ENCODE measurements at regions of chr3 and their contacts with region 1.

Region 1: DNA sequence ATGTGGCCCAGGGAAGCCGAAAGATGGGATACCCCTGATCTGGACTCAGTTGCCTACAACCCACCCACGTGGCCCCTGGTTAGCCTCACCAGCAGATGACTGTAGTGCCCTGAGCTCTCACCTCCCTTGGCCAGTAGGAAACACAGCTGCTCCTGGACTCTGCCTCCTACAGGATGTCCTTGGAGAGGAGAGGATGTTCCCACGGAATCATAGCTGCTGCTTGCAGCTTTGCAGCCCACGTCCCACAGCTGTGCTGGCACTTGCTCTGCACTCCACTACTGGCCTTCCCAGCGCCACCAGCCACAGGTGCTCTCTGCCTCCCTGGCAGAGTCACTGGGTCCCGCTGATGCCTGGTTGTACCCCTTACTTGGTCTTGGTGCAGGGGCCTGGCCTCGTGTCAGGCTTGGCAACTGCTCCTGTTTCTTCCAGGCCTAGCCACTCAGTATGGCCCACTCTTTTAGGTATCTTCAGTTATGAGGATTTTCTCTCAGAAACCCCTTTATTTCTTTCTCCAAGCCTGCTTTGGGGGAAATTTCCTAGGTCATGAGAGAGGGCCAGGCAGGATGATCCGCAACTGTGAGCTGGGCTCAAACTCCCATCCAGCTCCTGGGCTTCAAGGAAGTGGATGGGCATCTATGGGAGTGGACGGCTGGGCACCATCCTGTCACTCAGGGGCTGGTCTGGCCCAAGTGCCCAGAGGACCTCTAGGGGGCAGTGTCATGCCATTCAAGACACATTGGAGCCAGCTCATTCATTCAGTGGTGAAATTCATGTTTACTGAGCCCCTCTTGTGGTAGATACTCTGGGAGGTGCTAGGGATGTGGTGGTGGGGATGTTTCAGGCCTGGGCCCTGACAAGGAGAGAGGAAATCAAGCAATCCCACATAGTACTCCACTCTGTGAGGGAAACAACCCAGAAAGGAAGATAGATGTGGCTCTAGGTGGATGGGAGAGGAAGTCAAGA is 16.2 kb upstream of the VILL start:
- DNase-seq: peak; percentile 82
- ATAC-seq: peak; percentile 97
- H3K4me3 Mint-ChIP-seq: no peak overlapping the region
- H3K27ac Mint-ChIP-seq: peak overlapping the region; percentile 1
- H3K4me1 Mint-ChIP-seq: peaks cover 6% of the 10 kb centered on the region
- H3K27me3 Mint-ChIP-seq: peaks cover 2% of the 10 kb centered on the region

Region 2: DNA sequence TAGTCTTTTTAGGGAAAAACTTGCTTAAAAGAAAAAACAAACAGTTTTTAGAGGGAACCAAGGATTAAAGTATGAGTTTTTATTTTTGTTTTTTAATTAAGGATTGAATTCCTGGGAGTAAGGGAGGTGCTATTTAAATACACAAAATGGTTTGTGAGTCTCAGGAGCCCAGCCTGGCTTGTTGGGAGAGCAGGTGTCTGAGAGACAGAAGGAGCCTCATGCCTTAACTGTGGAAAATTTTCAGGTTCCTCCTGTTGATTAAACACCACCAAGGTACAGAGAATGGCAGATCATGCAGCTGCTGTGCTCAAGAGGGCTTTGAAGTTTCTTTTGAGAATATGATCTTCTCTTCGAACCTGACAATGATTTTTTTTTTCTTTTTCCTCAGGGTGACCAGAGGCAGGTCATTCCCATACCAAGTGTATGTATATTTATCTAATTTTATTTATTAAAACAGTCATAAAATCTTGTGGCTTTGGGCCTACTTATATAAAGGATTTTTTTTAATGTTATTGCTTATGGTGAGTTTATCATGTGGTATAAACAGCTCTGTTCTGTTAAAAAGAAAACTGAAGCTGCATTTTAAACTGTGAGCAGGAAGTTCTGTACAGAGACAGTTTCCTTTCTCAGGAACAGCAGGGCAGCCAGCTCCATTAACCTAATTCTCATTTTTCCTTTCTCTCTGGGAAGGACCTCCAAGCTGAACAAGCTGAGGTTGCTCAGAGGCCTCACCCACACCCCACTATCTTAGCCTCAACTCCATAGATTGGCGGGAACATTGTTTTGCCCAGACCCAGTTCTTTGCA is 17.5 kb before region 1 on chr3:
- CTCF ChIA-PET with region 1: interaction called, 15 read pairs
- POLR2A ChIA-PET with region 1: no interaction called
- DNase-seq: no peak
- ATAC-seq: peak; percentile 5
- H3K4me3 Mint-ChIP-seq: no peak overlapping the region
- H3K27ac Mint-ChIP-seq: peak overlapping the region; percentile 90
- H3K4me1 Mint-ChIP-seq: peaks cover 22% of the 10 kb centered on the region
- H3K27me3 Mint-ChIP-seq: no peaks in the 10 kb centered on the region

Region 3: GRCh38 chr3:38004415-38005076 is 30.1 kb after region 1 on chr3:
- CTCF ChIA-PET with region 1: interaction called, 36 read pairs
- POLR2A ChIA-PET with region 1: interaction called, 3 read pairs
- DNase-seq: peak; percentile 68
- ATAC-seq: peak; percentile 61
- H3K4me3 Mint-ChIP-seq: no peak overlapping the region
- H3K27ac Mint-ChIP-seq: peak overlapping the region; percentile 62
- H3K4me1 Mint-ChIP-seq: peaks cover 9% of the 10 kb centered on the region
- H3K27me3 Mint-ChIP-seq: no peaks in the 10 kb centered on the region

Region 4: DNA sequence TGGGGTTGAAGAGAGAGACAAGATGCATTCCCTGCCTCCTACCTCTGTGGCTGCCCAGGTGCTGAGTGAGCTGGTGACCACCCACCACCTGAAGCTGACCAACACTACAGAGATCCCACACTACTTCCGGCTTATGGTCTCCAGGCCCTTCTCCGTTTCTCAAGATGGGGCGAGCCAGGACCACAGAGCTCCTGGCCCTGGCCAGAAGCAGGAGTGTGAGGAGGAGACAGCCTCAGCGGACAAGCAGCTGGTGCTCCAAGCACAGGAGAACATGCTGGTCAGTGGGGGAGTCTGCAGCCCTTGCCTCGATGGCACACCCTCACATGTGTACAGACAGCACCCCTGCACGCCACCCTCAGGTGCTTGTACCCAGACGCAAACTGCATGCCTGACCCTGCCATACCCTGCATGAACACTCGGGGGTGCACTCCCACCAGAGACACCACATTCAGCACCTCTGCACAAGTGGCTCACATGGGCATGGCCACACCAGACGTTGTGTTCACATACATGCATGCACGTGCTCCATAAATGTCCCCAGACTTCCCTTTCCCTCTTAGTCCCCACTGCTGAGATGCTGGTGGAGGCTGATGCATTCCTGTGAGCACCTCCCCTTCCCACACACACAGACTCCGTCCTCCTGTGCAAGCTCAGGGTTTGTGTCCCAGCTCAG is 143.5 kb after region 1 on chr3:
- CTCF ChIA-PET with region 1: interaction called, 12 read pairs
- POLR2A ChIA-PET with region 1: interaction called, 3 read pairs
- DNase-seq: peak; percentile 84
- ATAC-seq: peak; percentile 81
- H3K4me3 Mint-ChIP-seq: no peak overlapping the region
- H3K27ac Mint-ChIP-seq: peak overlapping the region; percentile 19
- H3K4me1 Mint-ChIP-seq: peaks cover 5% of the 10 kb centered on the region
- H3K27me3 Mint-ChIP-seq: no peaks in the 10 kb centered on the region

Region 5: DNA sequence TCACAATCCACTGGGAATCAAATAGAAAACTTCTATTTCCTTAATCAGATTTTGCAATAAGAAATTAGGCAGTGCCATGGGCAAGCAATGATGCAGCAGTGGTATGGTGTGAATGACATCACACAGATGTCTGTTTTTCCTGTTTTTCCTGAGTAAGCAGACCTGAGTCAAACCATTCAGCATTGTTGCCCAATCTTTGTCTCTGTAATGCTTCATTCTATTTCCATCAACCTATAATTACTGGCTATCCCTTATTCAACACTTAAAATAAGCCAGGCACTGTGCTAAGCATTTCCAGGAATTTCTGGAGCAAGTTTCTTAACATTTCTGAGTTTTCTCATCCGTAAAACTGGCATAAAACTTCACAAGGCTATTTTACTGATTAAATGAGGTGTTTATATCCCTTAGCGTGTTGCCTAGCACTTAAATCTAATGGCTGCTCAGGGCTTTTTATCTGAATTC is 179.7 kb after region 1 on chr3:
- CTCF ChIA-PET with region 1: no interaction called
- POLR2A ChIA-PET with region 1: no interaction called
- DNase-seq: no peak
- ATAC-seq: no peak
- H3K4me3 Mint-ChIP-seq: no peak overlapping the region
- H3K27ac Mint-ChIP-seq: no peak overlapping the region
- H3K4me1 Mint-ChIP-seq: peaks cover 42% of the 10 kb centered on the region
- H3K27me3 Mint-ChIP-seq: no peaks in the 10 kb centered on the region